ENCODE measurements at regions of chr21 and their contacts with region 1.

Region 1: DNA sequence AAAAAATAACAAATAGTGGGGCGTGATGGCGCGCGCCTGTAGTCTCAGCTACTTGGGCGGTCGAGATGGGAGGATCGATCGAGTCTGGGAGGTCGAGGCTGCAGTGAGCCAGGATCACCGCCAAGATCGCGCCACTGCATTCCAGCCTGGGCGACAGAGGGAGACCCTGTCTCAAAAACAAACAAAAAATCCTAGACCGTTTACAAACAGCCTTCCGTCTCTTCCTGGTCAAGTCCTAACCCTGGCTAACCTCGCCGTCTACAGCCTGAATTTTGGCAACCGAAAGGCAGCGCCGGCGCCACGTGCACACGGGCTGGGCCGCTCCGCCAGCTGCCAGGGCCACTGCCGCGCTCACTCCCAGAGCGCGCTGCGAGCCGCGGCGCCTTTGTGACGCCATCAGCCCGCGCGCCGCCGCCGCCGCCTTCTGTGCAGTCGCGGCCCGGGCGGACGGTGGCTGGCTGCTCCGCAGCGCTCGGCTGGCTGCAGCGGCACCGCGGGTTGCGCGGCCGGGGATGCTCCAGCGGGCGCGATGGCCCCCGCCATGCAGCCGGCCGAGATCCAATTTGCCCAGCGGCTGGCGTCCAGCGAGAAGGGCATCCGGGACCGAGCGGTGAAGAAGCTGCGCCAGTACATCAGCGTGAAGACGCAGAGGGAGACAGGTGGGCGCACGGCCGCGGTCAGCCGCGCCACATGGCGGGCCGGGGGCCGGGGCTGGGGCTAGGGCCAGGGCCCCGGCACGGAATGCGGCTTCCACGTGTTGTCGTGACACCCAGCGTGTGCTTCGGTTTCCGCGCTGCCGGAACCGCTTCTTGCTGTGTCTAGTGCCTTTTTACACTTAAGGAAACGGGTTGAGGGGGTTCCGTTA is at the starts of genes HSF2BP and RRP1B:
- DNase-seq: peak; percentile 85
- ATAC-seq: peak; percentile 90
- H3K4me3 Mint-ChIP-seq: peak within 1 kb of the TSS; percentile 93
- H3K27ac Mint-ChIP-seq: peak within 1 kb of the TSS; percentile 87
- H3K4me1 Mint-ChIP-seq: peaks cover 30% of the 10 kb centered on the region
- H3K27me3 Mint-ChIP-seq: peaks cover 3% of the 10 kb centered on the region
- CTCF ChIP-seq: no peak
- total RNA-seq, gene HSF2BP: 0.58 and 0.61 TPM in 2 replicates
- total RNA-seq, gene RRP1B: 29.6 and 32.0 TPM in 2 replicates

Region 2: GRCh38 chr21:43728467-43729390 is 69.4 kb after region 1 on chr21:
- CTCF ChIA-PET with region 1: no interaction called
- POLR2A ChIA-PET with region 1: interaction called, 14 read pairs
- intact Hi-C with region 1: no loop called
- DNase-seq: peak; percentile 69
- ATAC-seq: peak; percentile 75
- H3K4me3 Mint-ChIP-seq: peak overlapping the region; percentile 88
- H3K27ac Mint-ChIP-seq: peak overlapping the region; percentile 82
- H3K4me1 Mint-ChIP-seq: peaks cover 54% of the 10 kb centered on the region
- H3K27me3 Mint-ChIP-seq: no peaks in the 10 kb centered on the region
- CTCF ChIP-seq: no peak